Posterior cingulate gyrus (tissue), 11 donors: ENCODE measurements at regions of chr10 and their contacts with region 1.

Region 1: GRCh38 chr10:122648599-122649428 is 50.8 kb downstream of the C10orf120 start:
- DNase-seq: peak in 7 of 10 donors; percentile 67 to 94 (median 69)

Region 2: DNA sequence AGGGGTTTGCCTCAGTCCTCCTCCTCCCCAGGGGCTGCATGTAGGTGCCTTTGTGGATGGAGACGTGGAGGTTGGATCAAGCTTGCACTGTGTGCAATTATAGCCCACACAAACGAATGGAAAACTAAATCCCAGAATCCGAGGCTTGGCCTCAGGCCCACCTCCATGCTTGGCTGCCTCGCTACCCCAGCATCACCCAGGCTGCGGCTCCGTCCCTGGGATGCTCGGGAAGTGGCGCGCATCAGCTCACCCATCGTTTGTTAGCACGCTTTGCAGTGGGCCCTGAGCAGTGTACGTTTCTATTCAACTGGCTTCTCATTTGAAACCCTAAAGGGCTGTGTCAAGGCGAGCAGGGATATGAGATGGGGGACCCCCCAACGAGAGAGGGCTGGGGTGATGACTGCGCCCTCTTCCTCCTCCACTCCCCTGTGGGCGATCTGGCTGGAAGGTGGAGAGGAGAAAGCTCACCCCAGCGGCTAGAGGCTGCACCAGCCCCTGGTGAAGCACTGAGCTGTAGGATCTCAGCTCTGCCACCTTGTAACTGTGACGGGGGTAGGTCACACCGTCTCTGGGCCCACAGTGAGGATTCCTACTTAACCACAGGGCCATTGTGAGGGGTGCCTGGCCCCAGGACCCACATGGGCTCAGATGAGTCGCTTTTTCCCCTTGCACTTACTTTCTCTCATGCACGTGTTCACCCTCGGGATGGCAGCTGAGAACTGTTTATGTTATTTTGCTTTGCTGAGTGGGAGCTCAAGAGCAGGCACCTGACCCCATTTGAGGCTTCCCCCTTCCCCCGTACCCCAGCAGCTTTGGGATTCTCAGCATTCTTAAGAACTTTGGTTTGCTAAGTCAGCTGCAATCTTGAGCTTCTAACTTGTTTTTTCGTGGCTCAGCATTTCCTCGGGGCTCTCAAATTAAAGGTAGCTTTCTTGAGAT is 390.4 kb before region 1 on chr10:
- intact Hi-C with region 1: no loop called
- DNase-seq: peak in 2 of 10 donors; percentile 57 to 74

Region 3: DNA sequence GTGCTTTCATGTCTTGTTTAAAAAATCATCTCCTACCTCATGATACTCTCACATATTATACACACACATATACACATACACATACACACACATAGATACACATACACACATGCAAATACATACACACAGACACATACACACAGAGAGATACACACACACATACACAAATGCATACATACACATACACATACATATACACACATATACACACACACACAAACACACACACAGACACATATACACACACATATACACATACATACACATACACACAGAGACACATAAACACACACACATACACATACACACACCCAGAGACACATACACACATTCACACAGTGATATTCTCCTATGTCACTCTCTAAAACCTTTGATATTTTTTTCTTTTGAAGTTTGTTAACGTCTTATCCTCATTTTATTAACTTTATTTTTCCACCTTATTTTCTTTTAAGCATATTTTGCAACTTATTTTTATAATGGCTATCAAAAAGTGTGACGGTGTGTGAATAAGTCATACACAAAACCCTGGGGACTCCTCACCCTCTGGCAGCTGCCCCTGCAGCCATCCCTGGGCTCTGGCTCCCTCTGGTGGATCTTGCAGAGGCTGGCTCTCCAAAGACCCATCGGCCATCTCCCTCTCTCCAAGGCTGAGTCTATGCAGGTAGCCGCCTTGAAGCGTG is 54.8 kb after region 1 on chr10:
- intact Hi-C with region 1: loop called (anchors 2 kb)
- DNase-seq: peak; percentile 54 to 98 (median 83)